Naive thymus-derived CD4-positive, alpha-beta T cell (primary cell): ENCODE measurements at regions of chr18 and their contacts with region 1.

Region 1: GRCh38 chr18:29644276-29644675 is 1398.3 kb downstream of the DSC3 start:
- DNase-seq: no peak
- ATAC-seq: no peak
- H3K4me3 ChIP-seq: no peak overlapping the region
- H3K4me3 Mint-ChIP-seq: no peak overlapping the region
- H3K27ac ChIP-seq: no peak overlapping the region
- H3K27ac Mint-ChIP-seq: no peak overlapping the region
- H3K4me1 ChIP-seq: no peaks in the 10 kb centered on the region
- H3K4me1 Mint-ChIP-seq: no peaks in the 10 kb centered on the region
- H3K27me3 ChIP-seq: no peaks in the 10 kb centered on the region
- H3K27me3 Mint-ChIP-seq: no peaks in the 10 kb centered on the region

Region 2: DNA sequence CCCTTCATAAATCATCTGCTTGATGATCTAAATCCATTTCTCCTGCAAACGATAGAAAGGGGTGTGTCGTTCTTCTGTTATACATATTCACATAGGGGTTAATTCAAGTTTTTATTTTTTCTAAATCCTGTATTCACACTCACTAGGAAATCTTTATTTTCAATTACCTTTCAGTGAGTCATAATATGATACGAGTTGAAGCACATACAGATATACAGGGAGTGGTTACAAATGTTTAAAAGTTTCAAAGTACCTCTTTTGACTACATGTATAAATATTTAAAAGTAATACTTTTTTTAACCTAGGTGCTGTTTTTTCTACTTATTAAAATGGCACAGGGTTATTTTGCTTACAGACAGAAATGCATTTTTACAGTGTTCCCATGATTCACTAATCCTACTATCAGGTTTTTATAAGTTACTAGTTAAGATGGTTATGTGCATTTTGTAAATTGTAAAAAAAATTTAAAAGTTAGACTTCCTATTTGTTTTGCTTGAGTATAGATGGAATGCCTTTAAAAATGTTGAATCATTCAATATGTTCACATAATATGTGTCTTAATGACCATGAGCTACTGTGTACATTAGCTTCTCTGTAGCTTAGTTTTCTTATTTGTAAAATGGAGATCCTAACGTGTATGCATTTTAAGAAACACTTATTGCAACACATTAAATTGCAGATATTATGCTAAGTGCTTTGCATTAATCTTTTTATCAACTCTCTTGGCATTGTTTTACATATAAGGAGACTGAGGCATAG is 20.2 kb after region 1 on chr18:
- CTCF ChIA-PET with region 1: no interaction called
- POLR2A ChIA-PET with region 1: no interaction called
- intact Hi-C with region 1: loop called in 1 of 2 experiments (anchors 1 kb)
- DNase-seq: no peak
- ATAC-seq: no peak
- H3K4me3 ChIP-seq: no peak overlapping the region
- H3K4me3 Mint-ChIP-seq: no peak overlapping the region
- H3K27ac ChIP-seq: no peak overlapping the region
- H3K27ac Mint-ChIP-seq: no peak overlapping the region
- H3K4me1 ChIP-seq: no peaks in the 10 kb centered on the region
- H3K4me1 Mint-ChIP-seq: no peaks in the 10 kb centered on the region
- H3K27me3 ChIP-seq: no peaks in the 10 kb centered on the region
- H3K27me3 Mint-ChIP-seq: no peaks in the 10 kb centered on the region

Region 3: GRCh38 chr18:29712785-29713184 is 68.5 kb after region 1 on chr18:
- CTCF ChIA-PET with region 1: no interaction called
- POLR2A ChIA-PET with region 1: no interaction called
- intact Hi-C with region 1: loop called in 1 of 2 experiments (anchors 10 kb)
- DNase-seq: no peak
- ATAC-seq: no peak
- H3K4me3 ChIP-seq: no peak overlapping the region
- H3K4me3 Mint-ChIP-seq: no peak overlapping the region
- H3K27ac ChIP-seq: no peak overlapping the region
- H3K27ac Mint-ChIP-seq: no peak overlapping the region
- H3K4me1 ChIP-seq: no peaks in the 10 kb centered on the region
- H3K4me1 Mint-ChIP-seq: no peaks in the 10 kb centered on the region
- H3K27me3 ChIP-seq: no peaks in the 10 kb centered on the region
- H3K27me3 Mint-ChIP-seq: no peaks in the 10 kb centered on the region